Common myeloid progenitor, CD34-positive (primary cell): ENCODE measurements at regions of chr1 and their contacts with region 1.

Region 1: GRCh38 chr1:19643602-19644394 is at the start of gene NBL1:
- DNase-seq: peak; percentile 55 to 82 (median 82)
- H3K4me3 ChIP-seq: peak within 1 kb of the TSS; percentile 57 to 89 (median 72)
- H3K27ac ChIP-seq: peak within 1 kb of the TSS; percentile 54 to 68
- H3K4me1 ChIP-seq: peaks cover 0 to 51% (median 44%) of the 10 kb centered on the region in 4 experiments
- H3K27me3 ChIP-seq: peaks cover 0 to 12% (median 0%) of the 10 kb centered on the region in 5 experiments

Region 2: GRCh38 chr1:19559641-19560040 is 84.2 kb before region 1 on chr1:
- CTCF ChIA-PET with region 1: no interaction called
- POLR2A ChIA-PET with region 1: no interaction called
- DNase-seq: peak; percentile 5 to 37 (median 32)
- H3K4me3 ChIP-seq: no peak overlapping the region
- H3K27ac ChIP-seq: no peak overlapping the region
- H3K4me1 ChIP-seq: peaks cover 0 to 16% (median 7%) of the 10 kb centered on the region in 4 experiments
- H3K27me3 ChIP-seq: peaks cover 0 to 2% (median 0%) of the 10 kb centered on the region in 5 experiments

Region 3: DNA sequence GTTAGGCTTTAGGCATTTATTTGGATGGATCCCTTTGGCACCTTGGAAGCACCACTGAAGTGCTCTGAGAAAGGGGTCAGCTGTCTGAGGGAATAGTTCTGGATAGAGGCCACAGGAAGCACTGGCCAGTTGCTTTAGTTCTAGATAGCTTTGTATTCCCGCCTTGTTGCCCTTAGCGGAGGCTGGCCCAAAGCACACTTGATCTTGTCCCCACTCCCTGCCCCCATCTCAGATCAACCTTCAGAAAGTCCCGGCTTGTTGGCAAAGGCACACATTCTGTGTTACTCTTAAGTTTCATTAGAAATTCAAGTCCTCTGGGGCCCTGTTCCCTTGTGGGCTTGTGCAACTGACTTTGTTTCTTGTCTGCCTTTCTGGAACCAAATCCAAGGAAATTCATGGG is 14.9 kb before region 1 on chr1:
- CTCF ChIA-PET with region 1: interaction called, 29 read pairs
- POLR2A ChIA-PET with region 1: interaction called, 3 read pairs
- DNase-seq: no peak
- H3K4me3 ChIP-seq: no peak overlapping the region
- H3K27ac ChIP-seq: no peak overlapping the region
- H3K4me1 ChIP-seq: no peaks in the 10 kb centered on the region
- H3K27me3 ChIP-seq: no peaks in the 10 kb centered on the region